RWPE1 (cell line): ENCODE measurements at regions of chr17 and their contacts with region 1.

Region 1: DNA sequence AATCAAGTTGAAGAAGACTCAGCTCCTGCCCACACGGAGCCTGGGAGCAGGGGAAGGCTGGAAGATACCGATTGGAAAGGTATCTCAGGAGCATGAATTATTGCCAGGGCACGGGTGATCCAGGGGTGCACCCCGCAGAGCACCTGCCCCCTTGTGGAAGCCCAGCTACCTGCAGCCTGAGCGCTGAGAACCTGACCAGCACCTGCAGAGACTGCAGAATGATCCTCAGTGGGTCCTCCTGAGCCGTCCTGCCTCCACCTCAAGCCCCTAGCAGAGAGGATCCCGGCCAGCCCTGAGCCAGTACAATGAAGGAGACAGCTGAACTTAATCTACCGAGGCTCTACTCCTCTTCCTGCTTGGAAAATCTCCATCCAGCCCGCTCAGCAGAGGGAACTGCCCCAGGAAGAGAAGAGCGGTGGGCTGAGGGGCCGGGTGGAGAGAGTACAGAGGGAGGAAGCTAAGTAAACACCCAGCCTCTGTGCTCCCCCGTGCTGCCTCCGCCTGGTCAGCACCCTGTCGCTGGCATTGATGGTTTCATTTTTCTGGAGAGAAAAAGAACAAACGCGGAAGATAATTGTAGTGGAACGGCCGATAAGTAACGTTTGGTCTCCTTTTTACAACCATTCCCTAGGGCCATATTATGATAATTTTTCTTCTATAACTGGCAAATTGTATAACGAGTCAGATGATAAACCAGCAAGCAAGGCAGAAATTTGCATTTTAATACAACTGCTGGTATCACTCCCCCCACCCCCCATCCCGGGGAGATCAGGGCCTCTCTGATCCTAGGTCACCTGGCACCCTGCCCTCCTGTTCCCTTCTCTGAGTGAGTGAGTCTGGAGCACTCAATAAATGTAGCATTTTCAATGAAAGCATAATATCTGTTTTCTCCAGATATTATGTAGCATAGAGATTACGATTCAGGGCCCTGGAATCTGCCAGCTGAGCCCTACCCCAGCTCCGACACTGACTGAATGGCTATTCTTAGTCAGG is 204.5 kb upstream of the RPL38 start:
- DNase-seq: peak; percentile 80
- H3K27ac ChIP-seq: no peak overlapping the region
- CTCF ChIP-seq: peak; percentile 86

Region 2: DNA sequence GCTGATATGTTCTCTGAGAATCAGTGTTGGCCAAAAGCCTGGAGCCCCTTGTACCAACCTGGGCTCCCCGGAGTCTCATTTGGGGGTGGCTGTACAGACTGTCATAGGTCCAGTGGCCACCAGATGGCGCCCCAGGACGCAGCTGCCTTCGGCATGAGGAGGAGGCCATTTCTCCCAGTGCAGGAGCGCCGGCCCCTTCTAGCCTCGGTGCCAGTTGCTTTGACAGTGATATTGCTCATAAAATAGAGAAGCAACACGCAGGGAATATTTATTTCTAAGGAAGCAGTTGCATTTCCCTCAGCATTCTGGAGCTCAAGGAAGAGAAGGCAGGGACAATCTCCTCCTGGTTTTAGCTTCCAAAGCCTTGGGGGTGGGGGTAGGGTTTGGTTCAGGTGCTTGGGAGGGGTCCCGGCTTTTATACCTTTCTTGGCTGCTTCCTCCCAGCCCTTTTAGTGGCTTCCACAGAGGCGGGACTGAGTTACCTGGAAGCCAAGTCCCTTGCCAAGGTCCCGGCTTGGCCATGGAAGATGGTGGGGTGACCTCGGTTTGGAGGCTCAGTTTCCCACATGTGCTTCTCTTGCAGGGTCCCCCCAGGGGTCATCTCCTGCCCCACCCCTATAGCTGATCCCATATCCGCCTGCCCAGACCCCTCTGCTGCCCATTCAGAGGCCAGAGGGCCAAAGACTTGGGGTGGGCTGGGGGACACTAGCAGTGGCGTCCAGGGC is 569.3 kb before region 1 on chr17:
- CTCF ChIA-PET with region 1: interaction called, 13 read pairs
- POLR2A ChIA-PET with region 1: no interaction called
- DNase-seq: peak; percentile 87
- H3K27ac ChIP-seq: no peak overlapping the region
- CTCF ChIP-seq: peak; percentile 98